Activated CD4-positive, alpha-beta T cell treated with anti-CD3 and anti-CD28 coated beads, Interleukin-2, amount 10 ng/mL, durations not matched to agents 24 days and 14 days (primary cell): ENCODE measurements at regions of chr3 and their contacts with region 1.

Region 1: DNA sequence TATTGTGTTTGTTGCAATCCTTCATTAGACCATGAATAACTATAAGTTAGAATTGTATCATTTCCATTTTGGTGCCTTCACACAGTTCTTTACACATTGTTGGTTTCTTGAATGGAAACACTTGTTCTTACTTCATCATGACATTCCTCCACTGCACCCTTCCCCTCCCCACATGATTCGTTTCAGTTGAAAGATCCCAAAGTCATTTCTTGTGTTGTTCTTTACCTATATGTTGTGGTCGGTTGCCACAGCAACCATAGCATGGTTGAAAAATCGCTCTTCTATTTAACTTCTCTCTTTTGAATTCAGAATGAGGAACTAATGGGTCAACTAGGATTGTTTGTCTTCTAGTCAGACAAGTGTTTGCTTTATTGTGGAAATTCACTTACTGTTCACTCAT is 103.3 kb downstream of the IL1RAP start:
- DNase-seq: peak; percentile 88
- H3K4me3 Mint-ChIP-seq: peak overlapping the region; percentile 56
- H3K27ac Mint-ChIP-seq: peak overlapping the region; percentile 91
- H3K4me1 Mint-ChIP-seq: peaks cover 69% of the 10 kb centered on the region
- H3K27me3 Mint-ChIP-seq: no peaks in the 10 kb centered on the region

Region 2: DNA sequence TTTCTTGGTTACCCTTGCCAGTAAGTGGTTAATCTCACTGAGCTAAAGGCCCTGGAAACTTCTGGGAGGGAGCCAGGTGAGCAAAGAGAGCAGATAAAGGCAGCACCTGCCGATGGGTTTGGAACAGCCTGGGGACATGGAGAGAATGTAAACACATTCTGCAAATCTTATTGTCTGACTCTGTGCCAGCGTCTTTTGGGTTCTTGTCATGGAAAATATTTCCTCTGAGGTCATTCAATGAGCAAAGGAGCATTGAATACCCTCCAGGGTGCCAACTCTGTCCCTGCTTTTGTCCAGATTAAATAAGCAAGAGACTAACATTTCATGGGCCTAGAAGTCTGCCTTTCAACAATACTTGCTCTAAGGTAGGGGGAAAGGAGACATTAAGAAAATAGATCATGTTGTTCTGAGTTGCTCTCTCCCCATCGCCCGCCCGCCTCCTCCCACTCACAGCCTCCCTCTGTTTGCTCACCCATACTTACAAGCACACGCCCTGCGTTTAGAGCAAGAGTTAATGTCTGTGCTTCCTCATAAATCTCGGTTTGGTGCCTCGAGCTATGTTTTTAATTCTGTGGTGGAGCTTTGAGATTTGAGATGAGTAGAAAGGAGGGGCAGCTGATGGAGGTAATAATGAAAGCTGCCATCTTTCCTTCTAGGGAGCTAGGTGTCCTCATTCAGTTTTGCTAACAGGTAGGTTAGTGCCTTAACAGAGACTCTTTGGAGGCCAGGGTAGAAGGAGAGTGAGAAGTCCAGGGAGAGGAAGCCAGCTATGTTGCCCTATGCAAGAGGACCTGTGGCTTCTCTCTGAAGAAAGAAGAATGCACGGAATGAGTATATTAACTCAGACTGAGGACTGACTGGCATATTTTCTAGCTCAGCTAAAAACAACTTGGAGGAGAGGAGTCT is 1312.5 kb before region 1 on chr3:
- intact Hi-C with region 1: loop called (anchors 10 kb)
- DNase-seq: peak; percentile 65
- H3K4me3 Mint-ChIP-seq: peak overlapping the region; percentile 63
- H3K27ac Mint-ChIP-seq: peak overlapping the region; percentile 91
- H3K4me1 Mint-ChIP-seq: peaks cover 58% of the 10 kb centered on the region
- H3K27me3 Mint-ChIP-seq: no peaks in the 10 kb centered on the region

Region 3: GRCh38 chr3:190491533-190492054 is 125.6 kb before region 1 on chr3:
- intact Hi-C with region 1: loop called (anchors 1 kb)
- DNase-seq: no peak
- H3K4me3 Mint-ChIP-seq: peak overlapping the region; percentile 11
- H3K27ac Mint-ChIP-seq: peak overlapping the region; percentile 12
- H3K4me1 Mint-ChIP-seq: peaks cover 22% of the 10 kb centered on the region
- H3K27me3 Mint-ChIP-seq: peaks cover 69% of the 10 kb centered on the region

Region 4: GRCh38 chr3:190566043-190566933 is 50.9 kb before region 1 on chr3:
- intact Hi-C with region 1: loop called (anchors 1 kb)
- DNase-seq: peak; percentile 90
- H3K4me3 Mint-ChIP-seq: peak overlapping the region; percentile 41
- H3K27ac Mint-ChIP-seq: peak overlapping the region; percentile 94
- H3K4me1 Mint-ChIP-seq: peaks cover 69% of the 10 kb centered on the region
- H3K27me3 Mint-ChIP-seq: no peaks in the 10 kb centered on the region

Region 5: DNA sequence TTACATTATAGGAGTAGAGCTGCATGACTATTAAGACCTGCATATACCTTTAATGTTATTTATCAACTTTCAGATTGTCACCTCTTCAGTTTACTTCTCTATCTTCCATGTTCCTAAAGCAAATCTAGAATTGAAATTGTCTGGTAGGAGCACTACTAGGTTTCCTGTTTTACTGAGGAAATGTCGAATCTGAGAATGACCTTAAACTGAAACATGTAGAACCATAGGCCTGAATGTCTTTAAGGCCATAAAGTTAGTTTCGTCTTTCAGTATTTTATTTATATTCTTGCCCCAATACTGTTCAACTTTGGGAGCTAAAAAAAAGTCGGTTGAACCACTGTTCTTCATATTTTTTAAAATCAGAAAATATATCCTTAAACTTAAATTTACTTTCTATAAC is 10.6 kb before region 1 on chr3:
- intact Hi-C with region 1: loop called (anchors 1 kb)
- DNase-seq: no peak
- H3K4me3 Mint-ChIP-seq: no peak overlapping the region
- H3K27ac Mint-ChIP-seq: no peak overlapping the region
- H3K4me1 Mint-ChIP-seq: peaks cover 20% of the 10 kb centered on the region
- H3K27me3 Mint-ChIP-seq: no peaks in the 10 kb centered on the region

Region 6: DNA sequence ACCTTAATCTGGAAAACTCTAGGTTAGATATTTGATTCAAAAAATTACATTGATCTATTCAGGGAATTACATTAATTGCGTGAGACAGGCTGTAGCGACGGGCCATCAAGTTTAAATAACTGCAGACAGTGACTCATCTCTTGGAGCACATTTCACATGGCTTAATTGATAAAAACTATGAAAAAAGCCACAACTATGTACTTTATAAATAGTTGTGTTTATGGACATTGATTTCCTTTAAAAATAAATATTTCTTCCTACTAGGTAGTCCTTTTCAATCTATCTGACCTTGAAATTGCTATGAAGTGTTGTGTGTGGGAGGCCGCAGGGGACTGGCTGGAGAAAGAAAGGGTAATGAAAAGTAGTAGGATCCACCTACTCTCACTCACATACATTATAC is 54.5 kb after region 1 on chr3:
- intact Hi-C with region 1: no loop called
- DNase-seq: no peak
- H3K4me3 Mint-ChIP-seq: no peak overlapping the region
- H3K27ac Mint-ChIP-seq: no peak overlapping the region
- H3K4me1 Mint-ChIP-seq: peaks cover 1% of the 10 kb centered on the region
- H3K27me3 Mint-ChIP-seq: peaks cover 5% of the 10 kb centered on the region

Region 7: DNA sequence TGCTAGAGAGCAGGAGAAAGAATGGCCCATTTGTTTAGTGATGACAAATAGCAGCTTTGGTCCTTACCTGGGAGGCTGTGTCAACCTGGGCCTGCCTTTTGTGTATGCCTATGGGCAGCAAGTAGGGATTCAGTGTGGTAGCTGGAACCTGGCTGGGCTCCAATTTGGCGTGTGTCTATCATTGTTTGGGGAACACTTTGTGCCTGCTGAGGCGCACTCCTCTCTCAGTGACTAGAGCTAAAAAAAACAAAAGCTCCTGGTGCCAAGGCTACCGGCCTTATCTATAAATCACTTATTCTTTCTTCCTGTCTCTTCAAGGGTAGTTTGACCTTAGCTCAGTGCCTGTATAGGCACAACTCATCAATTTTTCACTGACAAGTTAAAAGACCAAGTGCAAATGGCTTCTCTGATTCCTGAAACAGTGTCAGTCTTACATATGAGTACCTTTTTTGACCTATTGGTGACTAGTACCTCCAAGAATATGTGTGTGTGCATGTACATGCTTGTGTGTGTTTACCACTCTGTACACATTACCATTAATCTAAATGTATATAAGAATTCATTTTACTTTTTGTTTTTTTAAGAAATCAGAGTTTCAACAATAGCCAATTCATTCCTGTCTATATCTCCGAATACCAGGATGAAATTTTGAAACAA is 190.7 kb after region 1 on chr3:
- intact Hi-C with region 1: no loop called
- DNase-seq: no peak
- H3K4me3 Mint-ChIP-seq: no peak overlapping the region
- H3K27ac Mint-ChIP-seq: no peak overlapping the region
- H3K4me1 Mint-ChIP-seq: no peaks in the 10 kb centered on the region
- H3K27me3 Mint-ChIP-seq: no peaks in the 10 kb centered on the region